ENCODE measurements at regions of chr14 and their contacts with region 1.

Region 1: GRCh38 chr14:64400829-64401459 is 12.8 kb downstream of the MTHFD1 start:
- DNase-seq: no peak
- ATAC-seq: no peak
- H3K4me3 ChIP-seq: no peak overlapping the region
- H3K4me3 Mint-ChIP-seq: no peak overlapping the region
- H3K27ac ChIP-seq: no peak overlapping the region
- H3K27ac Mint-ChIP-seq: no peak overlapping the region
- H3K4me1 ChIP-seq: no peaks in the 10 kb centered on the region
- H3K4me1 Mint-ChIP-seq: peaks cover 0 to 6% (median 0%) of the 10 kb centered on the region in 3 donors
- H3K27me3 ChIP-seq: no peaks in the 10 kb centered on the region
- H3K27me3 Mint-ChIP-seq: no peaks in the 10 kb centered on the region

Region 2: GRCh38 chr14:64209444-64210131 is 191.4 kb before region 1 on chr14:
- CTCF ChIA-PET with region 1: no interaction called
- POLR2A ChIA-PET with region 1: interaction called in 1 of 2 experiments, 15 read pairs
- DNase-seq: peak in 1 of 35 experiments; percentile 26
- ATAC-seq: no peak
- H3K4me3 ChIP-seq: no peak overlapping the region
- H3K4me3 Mint-ChIP-seq: no peak overlapping the region
- H3K27ac ChIP-seq: no peak overlapping the region
- H3K27ac Mint-ChIP-seq: no peak overlapping the region
- H3K4me1 ChIP-seq: no peaks in the 10 kb centered on the region
- H3K4me1 Mint-ChIP-seq: peaks cover 0 to 6% (median 6%) of the 10 kb centered on the region in 3 donors
- H3K27me3 ChIP-seq: no peaks in the 10 kb centered on the region
- H3K27me3 Mint-ChIP-seq: no peaks in the 10 kb centered on the region

Region 3: GRCh38 chr14:64421166-64421565 is 20.2 kb after region 1 on chr14:
- CTCF ChIA-PET with region 1: no interaction called
- POLR2A ChIA-PET with region 1: no interaction called
- DNase-seq: no peak
- ATAC-seq: no peak
- H3K4me3 ChIP-seq: no peak overlapping the region
- H3K4me3 Mint-ChIP-seq: no peak overlapping the region
- H3K27ac ChIP-seq: no peak overlapping the region
- H3K27ac Mint-ChIP-seq: no peak overlapping the region
- H3K4me1 ChIP-seq: no peaks in the 10 kb centered on the region
- H3K4me1 Mint-ChIP-seq: no peaks in the 10 kb centered on the region
- H3K27me3 ChIP-seq: no peaks in the 10 kb centered on the region
- H3K27me3 Mint-ChIP-seq: no peaks in the 10 kb centered on the region

Region 4: DNA sequence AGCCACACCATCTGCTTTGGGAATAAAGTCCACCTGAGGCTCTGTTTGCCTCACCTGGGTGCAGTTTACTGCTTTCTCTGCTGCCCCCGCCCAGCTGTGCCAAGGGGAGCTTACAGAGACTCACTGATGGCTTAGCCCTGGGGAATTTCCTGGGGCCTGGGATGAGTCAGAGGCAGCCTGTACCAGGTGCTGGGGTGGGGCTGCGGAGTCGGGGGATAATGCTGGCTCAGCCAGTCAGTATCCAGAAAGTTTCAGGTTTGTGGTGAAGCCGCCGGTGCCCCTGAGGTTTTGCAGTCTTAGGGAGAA is 325.6 kb after region 1 on chr14:
- CTCF ChIA-PET with region 1: no interaction called
- POLR2A ChIA-PET with region 1: no interaction called
- DNase-seq: peak in 5 of 35 experiments; percentile 15 to 58 (median 29)
- ATAC-seq: peak in 1 of 4 experiments; percentile 48
- H3K4me3 ChIP-seq: no peak overlapping the region
- H3K4me3 Mint-ChIP-seq: peak overlapping the region in 1 of 3 donors; percentile 9
- H3K27ac ChIP-seq: peak overlapping the region; percentile 77
- H3K27ac Mint-ChIP-seq: peak overlapping the region; percentile 94 to 96
- H3K4me1 ChIP-seq: peaks cover 36 to 98% of the 10 kb centered on the region in 2 experiments
- H3K4me1 Mint-ChIP-seq: peaks cover 57 to 97% (median 85%) of the 10 kb centered on the region in 3 donors
- H3K27me3 ChIP-seq: no peaks in the 10 kb centered on the region
- H3K27me3 Mint-ChIP-seq: no peaks in the 10 kb centered on the region

Measured in T-cell (primary cell).